H1 (cell line): ENCODE measurements at regions of chr17 and their contacts with region 1.

Region 1: DNA sequence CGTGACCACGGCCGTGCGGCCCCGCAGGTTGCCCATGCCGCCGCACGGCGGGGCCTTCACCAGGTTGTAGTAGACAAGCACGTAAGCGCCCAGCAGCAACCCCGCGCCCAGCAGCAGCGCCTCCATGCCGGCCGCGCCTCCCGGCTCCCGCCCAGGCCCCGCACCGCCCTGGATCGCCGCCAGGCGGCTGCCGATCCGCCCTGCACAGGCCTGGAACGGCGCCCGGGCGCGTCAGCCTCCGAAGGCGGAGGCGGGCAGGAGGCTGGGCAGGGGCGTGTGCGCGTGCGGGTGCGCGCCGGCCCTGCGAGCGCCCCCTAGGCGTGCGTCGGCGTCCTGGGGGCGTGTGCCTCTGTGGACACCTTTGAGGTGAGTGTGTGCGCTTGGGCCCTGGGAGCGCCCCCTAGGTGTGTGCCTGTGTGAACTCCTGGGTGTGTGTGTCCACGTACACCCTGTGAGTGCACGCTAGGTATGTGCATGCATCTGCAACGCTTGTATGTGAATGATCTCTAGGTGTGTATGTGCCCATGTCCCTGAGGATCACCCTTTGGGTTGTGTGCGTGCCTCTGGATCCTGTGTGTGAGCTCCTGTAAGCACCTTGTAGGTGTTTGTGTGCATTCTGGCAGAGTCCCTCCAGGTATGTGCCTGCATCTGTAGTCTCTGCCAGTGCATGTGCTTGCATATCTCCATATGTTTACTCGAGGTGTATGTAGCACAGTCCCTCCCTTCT is at the start of gene DHRS13:
- DNase-seq: peak; percentile 87 to 97
- H3K4me3 ChIP-seq: peak within 1 kb of the TSS; percentile 52 to 85 (median 72)
- H3K27ac ChIP-seq: peak within 1 kb of the TSS; percentile 54
- H3K4me1 ChIP-seq: peaks cover 0 to 9% (median 5%) of the 10 kb centered on the region in 4 experiments; a peak in 5 of 7 replicates
- H3K27me3 ChIP-seq: no peaks in the 10 kb centered on the region
- CTCF ChIP-seq: peak; percentile 76 to 100 (median 99)
- EP300 ChIP-seq: peak in 1 of 2 experiments; percentile 65; a peak in 1 of 3 replicates
- POLR2A ChIP-seq: no peak
- RAD21 ChIP-seq: peak; percentile 23 to 64
- total RNA-seq, gene DHRS13: 22.1 and 23.7 TPM in 2 replicates

Region 2: GRCh38 chr17:28887871-28888471 is 15.0 kb before region 1 on chr17:
- CTCF ChIA-PET with region 1: interaction called, 10 read pairs
- POLR2A ChIA-PET with region 1: interaction called, 19 read pairs
- DNase-seq: no peak
- H3K4me3 ChIP-seq: no peak overlapping the region
- H3K27ac ChIP-seq: no peak overlapping the region
- H3K4me1 ChIP-seq: peaks cover 0 to 3% (median under 1%) of the 10 kb centered on the region in 4 experiments; a peak in 3 of 7 replicates
- H3K27me3 ChIP-seq: no peaks in the 10 kb centered on the region
- CTCF ChIP-seq: no peak
- EP300 ChIP-seq: no peak
- POLR2A ChIP-seq: no peak
- RAD21 ChIP-seq: no peak

Region 3: GRCh38 chr17:28916302-28916934 is 13.4 kb after region 1 on chr17:
- CTCF ChIA-PET with region 1: interaction called, 123 read pairs
- POLR2A ChIA-PET with region 1: interaction called, 7 read pairs
- DNase-seq: no peak
- H3K4me3 ChIP-seq: no peak overlapping the region
- H3K27ac ChIP-seq: no peak overlapping the region
- H3K4me1 ChIP-seq: no peaks in the 10 kb centered on the region; a peak in 2 of 7 replicates
- H3K27me3 ChIP-seq: no peaks in the 10 kb centered on the region
- CTCF ChIP-seq: peak; percentile 30 to 61 (median 47)
- EP300 ChIP-seq: no peak
- POLR2A ChIP-seq: no peak
- RAD21 ChIP-seq: peak; percentile 33 to 51; a peak in 3 of 4 replicates